CD8-positive, alpha-beta T cell (primary cell): ENCODE measurements at regions of chr13 and their contacts with region 1.

Region 1: GRCh38 chr13:97235549-97236231 is 13.6 kb downstream of the MBNL2 start:
- DNase-seq: no peak
- ATAC-seq: no peak
- H3K4me3 ChIP-seq: no peak overlapping the region
- H3K4me3 Mint-ChIP-seq: no peak overlapping the region
- H3K27ac ChIP-seq: no peak overlapping the region
- H3K27ac Mint-ChIP-seq: no peak overlapping the region
- H3K4me1 ChIP-seq: no peaks in the 10 kb centered on the region
- H3K4me1 Mint-ChIP-seq: peaks cover 93% of the 10 kb centered on the region
- H3K27me3 ChIP-seq: no peaks in the 10 kb centered on the region
- H3K27me3 Mint-ChIP-seq: no peaks in the 10 kb centered on the region
- CTCF ChIP-seq: no peak

Region 2: GRCh38 chr13:97221989-97222700 is 13.5 kb before region 1 on chr13 and contains the start of gene MBNL2:
- CTCF ChIA-PET with region 1: interaction called, 6 read pairs
- POLR2A ChIA-PET with region 1: no interaction called
- intact Hi-C with region 1: loop called in 1 of 2 experiments (anchors 2 kb)
- DNase-seq: peak; percentile 72 to 93 (median 85)
- ATAC-seq: peak; percentile 97
- H3K4me3 ChIP-seq: peak within 1 kb of the TSS; percentile 57 to 76
- H3K4me3 Mint-ChIP-seq: peak within 1 kb of the TSS; percentile 88
- H3K27ac ChIP-seq: peak within 1 kb of the TSS; percentile 81 to 86
- H3K27ac Mint-ChIP-seq: peak within 1 kb of the TSS; percentile 93
- H3K4me1 ChIP-seq: peaks cover 39% of the 10 kb centered on the region
- H3K4me1 Mint-ChIP-seq: peaks cover 42% of the 10 kb centered on the region
- H3K27me3 ChIP-seq: no peaks in the 10 kb centered on the region
- H3K27me3 Mint-ChIP-seq: no peaks in the 10 kb centered on the region
- CTCF ChIP-seq: no peak
- total RNA-seq, gene MBNL2: 31.2 to 33.2 TPM